GM18951 (cell line): ENCODE measurements at regions of chr10 and their contacts with region 1.

Region 1: GRCh38 chr10:70233109-70233938 is at the start of gene PPA1:
- POLR2A ChIP-seq: peak; percentile 98

Region 2: GRCh38 chr10:70355051-70356021 is 122.0 kb after region 1 on chr10:
- in situ Hi-C with region 1: loop called (anchors 5 kb)
- POLR2A ChIP-seq: peak; percentile 43